ENCODE measurements at regions of chr1 and their contacts with region 1.

Region 1: DNA sequence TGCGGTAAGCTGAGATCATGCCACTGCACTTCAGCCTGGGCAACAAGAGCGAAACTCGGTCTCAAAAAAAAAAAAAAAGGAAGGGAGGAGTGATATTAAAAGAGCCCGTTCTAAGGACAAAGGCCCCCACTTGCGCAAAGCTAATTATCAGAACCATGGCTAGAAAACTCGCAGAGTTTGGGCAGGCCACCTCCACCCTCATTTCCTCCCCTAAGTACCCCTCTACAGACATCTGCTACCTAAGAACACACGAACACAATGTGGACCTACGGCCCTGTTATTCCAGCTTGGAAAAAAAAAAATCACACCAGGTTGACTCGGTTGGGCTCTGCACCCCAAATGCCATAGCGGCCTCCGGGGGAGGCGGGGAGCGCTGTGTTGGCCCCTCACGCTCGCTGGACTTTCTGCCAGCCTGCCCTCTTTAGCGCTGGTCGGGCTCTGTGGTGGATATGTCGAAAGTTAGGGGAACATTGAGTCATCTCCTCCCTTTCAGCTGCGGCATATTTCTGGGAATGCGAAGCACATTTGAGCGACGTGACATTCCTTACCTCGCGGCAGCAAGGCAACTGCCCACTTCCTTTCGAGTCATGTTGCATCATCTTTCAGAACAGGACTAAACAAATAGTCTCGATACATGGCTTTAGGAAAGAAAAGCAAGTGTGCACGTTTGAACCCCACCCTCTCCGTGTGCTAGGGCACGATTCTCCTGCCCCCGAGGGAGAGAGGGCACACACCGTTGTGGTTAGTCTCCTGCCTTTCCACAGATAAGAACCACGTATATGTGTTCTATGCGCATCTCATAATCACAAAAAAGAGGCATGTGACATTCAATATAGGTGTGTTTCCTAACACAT is 106.1 kb upstream of the SLC45A1 start:
- DNase-seq: no peak
- ATAC-seq: no peak
- H3K4me3 ChIP-seq: no peak overlapping the region
- H3K4me3 Mint-ChIP-seq: no peak overlapping the region
- H3K27ac ChIP-seq: no peak overlapping the region
- H3K27ac Mint-ChIP-seq: no peak overlapping the region
- H3K4me1 ChIP-seq: no peaks in the 10 kb centered on the region
- H3K4me1 Mint-ChIP-seq: peaks cover 12% of the 10 kb centered on the region
- H3K27me3 ChIP-seq: peaks cover 0 to 3% of the 10 kb centered on the region in 2 experiments
- H3K27me3 Mint-ChIP-seq: peaks cover 49% of the 10 kb centered on the region
- CTCF ChIP-seq: no peak

Region 2: DNA sequence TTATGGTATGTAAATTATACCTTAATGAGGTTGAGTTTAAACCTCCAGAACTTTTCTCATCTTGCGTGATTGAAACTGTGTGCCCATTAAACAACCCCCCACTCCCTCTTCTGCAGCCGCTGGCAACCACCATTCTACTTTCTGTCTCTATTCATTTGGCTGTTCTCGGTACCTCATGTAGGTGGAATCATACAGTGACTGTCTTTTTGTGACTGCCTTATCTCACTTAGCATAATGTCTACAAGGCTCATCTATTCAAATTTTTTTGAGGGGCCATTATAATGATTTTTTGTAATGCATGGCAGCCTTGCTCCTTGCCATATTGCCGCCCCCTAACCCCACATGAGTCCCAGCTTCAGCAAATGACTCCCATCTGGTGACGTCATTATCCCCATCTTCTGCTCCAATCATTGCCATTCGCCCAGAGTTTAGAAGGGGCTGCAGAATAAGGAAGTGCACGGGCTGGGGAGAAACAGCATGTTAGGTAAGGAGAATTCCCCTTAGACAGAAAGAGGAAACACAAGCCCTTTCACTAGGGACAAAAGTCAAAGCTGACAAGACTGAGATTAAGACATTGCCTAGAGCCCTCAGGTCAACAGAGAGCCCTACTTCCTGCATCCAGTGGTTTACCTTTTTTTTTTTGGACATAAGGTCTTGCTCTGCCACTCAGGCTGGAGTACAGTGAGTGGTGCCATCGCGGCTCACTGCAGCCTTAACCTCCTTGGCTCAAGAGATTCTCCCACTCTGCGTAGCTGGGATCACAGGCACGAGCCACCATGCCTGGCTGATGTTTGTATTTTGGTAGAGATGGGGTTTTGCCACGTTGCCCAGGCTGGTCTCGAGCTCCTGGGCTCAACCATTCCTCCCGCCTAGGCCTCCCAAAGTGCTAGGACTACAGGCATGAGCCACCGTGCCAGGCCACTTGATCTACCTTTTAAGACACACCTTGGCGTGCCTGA is 107.3 kb before region 1 on chr1:
- CTCF ChIA-PET with region 1: no interaction called
- POLR2A ChIA-PET with region 1: no interaction called
- intact Hi-C with region 1: loop called in 1 of 2 experiments (anchors 10 kb)
- DNase-seq: peak in 1 of 9 experiments; percentile 23
- ATAC-seq: no peak
- H3K4me3 ChIP-seq: no peak overlapping the region
- H3K4me3 Mint-ChIP-seq: no peak overlapping the region
- H3K27ac ChIP-seq: no peak overlapping the region
- H3K27ac Mint-ChIP-seq: no peak overlapping the region
- H3K4me1 ChIP-seq: no peaks in the 10 kb centered on the region
- H3K4me1 Mint-ChIP-seq: no peaks in the 10 kb centered on the region
- H3K27me3 ChIP-seq: no peaks in the 10 kb centered on the region
- H3K27me3 Mint-ChIP-seq: peaks cover 5% of the 10 kb centered on the region
- CTCF ChIP-seq: no peak

Region 3: GRCh38 chr1:8201238-8201861 is 10.5 kb before region 1 on chr1:
- CTCF ChIA-PET with region 1: no interaction called
- POLR2A ChIA-PET with region 1: no interaction called
- intact Hi-C with region 1: no loop called
- DNase-seq: no peak
- ATAC-seq: no peak
- H3K4me3 ChIP-seq: no peak overlapping the region
- H3K4me3 Mint-ChIP-seq: no peak overlapping the region
- H3K27ac ChIP-seq: no peak overlapping the region
- H3K27ac Mint-ChIP-seq: no peak overlapping the region
- H3K4me1 ChIP-seq: no peaks in the 10 kb centered on the region
- H3K4me1 Mint-ChIP-seq: peaks cover 3% of the 10 kb centered on the region
- H3K27me3 ChIP-seq: no peaks in the 10 kb centered on the region
- H3K27me3 Mint-ChIP-seq: no peaks in the 10 kb centered on the region
- CTCF ChIP-seq: no peak